Activated naive CD8-positive, alpha-beta T cell treated with anti-CD3 and anti-CD28 coated beads, Interleukin-2, amount 10 ng/mL, durations not matched to agents 7 days and 5 days (primary cell): ENCODE measurements at regions of chr9 and their contacts with region 1.

Region 1: GRCh38 chr9:129413537-129414376 is 207.1 kb downstream of the C9orf50 start:
- DNase-seq: peak; percentile 100
- ATAC-seq: peak; percentile 74
- H3K4me3 Mint-ChIP-seq: peak overlapping the region; percentile 83
- H3K27ac Mint-ChIP-seq: peak overlapping the region; percentile 95
- H3K4me1 Mint-ChIP-seq: peaks cover 21% of the 10 kb centered on the region
- H3K27me3 Mint-ChIP-seq: no peaks in the 10 kb centered on the region

Region 2: DNA sequence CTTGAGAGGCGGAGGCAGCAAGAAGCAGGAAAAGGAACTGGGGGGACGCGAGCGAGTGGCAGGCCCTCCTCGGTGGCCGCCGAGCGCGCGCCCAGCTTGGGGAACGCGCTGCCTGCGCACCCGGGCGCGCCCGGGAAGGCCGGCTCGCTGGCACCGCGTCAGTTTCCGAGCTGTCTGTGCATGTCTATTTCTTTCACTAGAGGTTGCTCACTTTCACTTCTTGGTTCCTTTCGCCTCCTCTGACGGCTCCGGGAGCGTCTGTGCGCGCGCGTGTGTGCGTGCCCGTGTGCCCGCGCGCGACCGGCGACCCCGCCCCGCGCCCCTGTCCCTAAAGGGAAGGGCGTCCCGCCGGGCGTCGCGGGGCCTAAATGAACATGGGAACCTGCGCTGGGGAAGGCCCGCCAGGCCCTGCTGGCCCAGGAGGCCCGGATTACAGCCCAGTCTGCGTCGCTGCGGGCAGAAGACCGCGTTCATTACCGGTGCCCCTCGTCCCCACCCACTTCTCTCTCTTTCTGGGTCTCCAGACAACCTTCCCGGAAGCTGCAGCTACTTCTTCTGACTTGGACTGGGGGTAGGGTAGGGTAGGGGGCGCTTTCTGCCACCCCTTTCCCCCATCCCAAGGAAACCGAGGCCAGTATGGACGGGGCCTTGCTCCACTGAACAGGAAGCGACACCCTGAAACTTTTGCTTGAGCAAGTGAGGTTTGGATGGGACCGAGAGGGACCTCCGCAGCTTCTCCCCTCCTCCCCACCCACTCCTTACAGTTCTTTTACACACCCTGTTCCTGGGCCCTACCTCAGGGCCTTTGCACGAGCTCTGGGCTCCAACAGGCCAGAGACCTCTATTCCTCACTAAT is 30.0 kb before region 1 on chr9:
- POLR2A ChIA-PET with region 1: interaction called, 17 read pairs
- DNase-seq: peak; percentile 81
- ATAC-seq: peak; percentile 91
- H3K4me3 Mint-ChIP-seq: peak overlapping the region; percentile 83
- H3K27ac Mint-ChIP-seq: peak overlapping the region; percentile 93
- H3K4me1 Mint-ChIP-seq: peaks cover 14% of the 10 kb centered on the region
- H3K27me3 Mint-ChIP-seq: peaks cover 2% of the 10 kb centered on the region

Region 3: DNA sequence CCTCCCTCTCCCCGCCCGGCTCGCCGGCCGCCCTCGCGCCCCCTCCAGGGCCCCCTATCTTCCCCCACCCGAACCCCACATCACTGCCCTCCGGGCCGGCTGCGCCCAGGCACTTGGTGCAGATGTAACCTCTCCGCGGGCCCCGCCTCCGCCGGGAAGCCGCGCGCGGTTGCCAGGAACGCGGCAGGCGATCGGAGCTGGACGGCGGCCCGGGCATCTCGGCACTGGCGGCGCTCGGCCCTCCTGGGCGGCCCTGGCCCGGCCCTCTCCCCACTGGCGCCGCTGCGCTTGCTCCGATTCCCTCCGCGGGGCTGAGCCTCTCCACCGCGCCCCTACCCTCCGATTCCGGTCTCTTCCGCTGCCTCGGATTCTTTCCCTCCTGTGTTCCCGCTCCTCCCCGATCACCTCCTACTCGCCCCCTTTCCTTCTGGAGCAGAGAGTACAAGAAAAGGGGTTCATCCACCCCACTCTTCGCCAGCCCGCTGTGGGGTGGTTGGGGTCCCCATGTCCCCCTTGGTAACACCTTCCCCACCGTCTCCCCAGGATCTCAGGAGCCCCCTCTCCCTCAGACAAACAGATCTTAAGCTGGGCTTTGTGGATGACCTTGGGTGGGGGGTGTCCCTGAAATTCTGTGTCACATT is 136.6 kb after region 1 on chr9:
- POLR2A ChIA-PET with region 1: no interaction called
- DNase-seq: no peak
- ATAC-seq: peak; percentile 28
- H3K4me3 Mint-ChIP-seq: peak overlapping the region; percentile 74
- H3K27ac Mint-ChIP-seq: no peak overlapping the region
- H3K4me1 Mint-ChIP-seq: peaks cover 5% of the 10 kb centered on the region
- H3K27me3 Mint-ChIP-seq: peaks cover 45% of the 10 kb centered on the region